ENCODE measurements at regions of chr2 and their contacts with region 1.

Region 1: DNA sequence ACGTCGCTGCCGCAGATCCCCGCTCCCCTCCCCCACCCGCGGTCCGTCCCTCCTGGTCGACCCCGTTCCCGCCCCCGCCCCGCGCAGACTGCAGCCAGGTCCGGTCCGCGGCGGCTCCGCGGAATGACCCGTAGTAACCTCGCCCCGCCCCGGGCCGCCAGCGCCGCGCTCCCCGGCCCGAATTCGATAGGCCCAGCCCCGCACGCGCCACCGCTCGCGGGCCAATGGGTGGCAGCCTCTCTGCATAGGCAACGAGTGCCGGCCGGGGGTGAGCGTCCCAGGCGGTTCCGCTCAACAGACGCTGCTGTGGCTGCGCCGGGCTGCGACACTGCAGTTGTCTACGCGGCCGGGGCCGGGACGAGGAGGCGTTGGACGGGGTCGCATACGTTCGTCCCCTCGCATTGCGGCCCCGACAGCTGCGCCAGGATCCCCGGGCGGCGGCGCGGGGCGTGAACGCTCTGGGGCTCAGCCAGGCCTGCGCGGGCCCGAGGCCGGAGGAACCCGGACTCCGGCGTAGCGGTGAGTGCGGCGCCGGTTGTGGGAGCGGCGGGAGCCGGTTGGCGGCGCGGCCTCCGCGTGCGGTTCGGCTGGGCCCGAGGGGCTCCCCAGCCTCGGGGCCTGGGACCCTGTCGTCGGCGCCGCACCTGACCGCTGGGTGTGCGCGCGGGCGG is at the start of gene ACSL3:
- DNase-seq: peak; percentile 96
- H3K4me3 Mint-ChIP-seq: no peak within 1 kb of the TSS
- H3K27ac Mint-ChIP-seq: peak within 1 kb of the TSS; percentile 66
- H3K4me1 Mint-ChIP-seq: peaks cover 14% of the 10 kb centered on the region
- H3K27me3 Mint-ChIP-seq: no peaks in the 10 kb centered on the region
- CTCF ChIP-seq: peak; percentile 4
- total RNA-seq, gene ACSL3: 183 and 203 TPM in 2 replicates

Region 2: GRCh38 chr2:222690564-222691200 is 170.2 kb before region 1 on chr2:
- CTCF ChIA-PET with region 1: interaction called, 9 read pairs
- POLR2A ChIA-PET with region 1: no interaction called
- intact Hi-C with region 1: loop called (anchors 1 kb)
- DNase-seq: peak; percentile 77
- H3K4me3 Mint-ChIP-seq: no peak overlapping the region
- H3K27ac Mint-ChIP-seq: no peak overlapping the region
- H3K4me1 Mint-ChIP-seq: no peaks in the 10 kb centered on the region
- H3K27me3 Mint-ChIP-seq: no peaks in the 10 kb centered on the region
- CTCF ChIP-seq: peak; percentile 98

Region 3: DNA sequence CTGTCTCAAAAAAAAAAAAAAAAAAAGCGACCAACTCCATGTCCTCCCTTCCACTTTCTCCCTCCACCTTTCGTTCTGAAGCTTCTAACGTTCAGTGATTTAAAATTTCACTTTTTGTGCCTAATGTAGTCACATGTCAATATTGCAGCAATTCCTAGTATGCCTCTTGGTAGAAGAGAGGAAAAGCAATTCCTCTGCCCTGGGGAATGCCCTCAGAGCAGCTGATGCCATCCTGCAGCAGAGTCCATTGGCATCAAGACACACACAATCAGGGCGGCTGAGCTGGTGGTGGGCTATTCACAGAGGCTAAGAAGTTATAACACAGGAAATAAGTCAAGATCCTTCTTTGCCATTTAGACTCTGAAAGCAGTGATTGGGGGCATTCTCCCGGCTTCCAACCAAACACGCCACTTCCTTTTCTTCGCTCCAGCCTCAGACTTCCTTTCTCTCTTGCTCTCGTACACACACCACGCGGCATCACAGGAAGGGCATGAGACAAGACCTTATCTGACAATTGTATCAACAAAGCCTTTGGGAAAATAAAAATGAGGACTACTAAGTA is 117.5 kb before region 1 on chr2:
- CTCF ChIA-PET with region 1: no interaction called
- POLR2A ChIA-PET with region 1: no interaction called
- intact Hi-C with region 1: no loop called
- DNase-seq: no peak
- H3K4me3 Mint-ChIP-seq: no peak overlapping the region
- H3K27ac Mint-ChIP-seq: no peak overlapping the region
- H3K4me1 Mint-ChIP-seq: peaks cover 10% of the 10 kb centered on the region
- H3K27me3 Mint-ChIP-seq: no peaks in the 10 kb centered on the region
- CTCF ChIP-seq: no peak

Region 4: GRCh38 chr2:222797261-222797660 is 63.6 kb before region 1 on chr2:
- CTCF ChIA-PET with region 1: interaction called, 41 read pairs
- POLR2A ChIA-PET with region 1: interaction called, 28 read pairs
- intact Hi-C with region 1: loop called (anchors 1 kb)
- DNase-seq: peak; percentile 53
- H3K4me3 Mint-ChIP-seq: no peak overlapping the region
- H3K27ac Mint-ChIP-seq: no peak overlapping the region
- H3K4me1 Mint-ChIP-seq: peaks cover 18% of the 10 kb centered on the region
- H3K27me3 Mint-ChIP-seq: no peaks in the 10 kb centered on the region
- CTCF ChIP-seq: peak; percentile 46

Region 5: GRCh38 chr2:222827417-222827816 is 33.5 kb before region 1 on chr2:
- CTCF ChIA-PET with region 1: interaction called, 4 read pairs
- POLR2A ChIA-PET with region 1: interaction called, 8 read pairs
- intact Hi-C with region 1: loop called (anchors 5 kb)
- DNase-seq: peak; percentile 55
- H3K4me3 Mint-ChIP-seq: no peak overlapping the region
- H3K27ac Mint-ChIP-seq: no peak overlapping the region
- H3K4me1 Mint-ChIP-seq: peaks cover 20% of the 10 kb centered on the region
- H3K27me3 Mint-ChIP-seq: no peaks in the 10 kb centered on the region
- CTCF ChIP-seq: no peak

Region 6: GRCh38 chr2:222872551-222872950 is 11.7 kb after region 1 on chr2:
- CTCF ChIA-PET with region 1: interaction called, 7 read pairs
- POLR2A ChIA-PET with region 1: interaction called, 240 read pairs
- intact Hi-C with region 1: no loop called
- DNase-seq: no peak
- H3K4me3 Mint-ChIP-seq: no peak overlapping the region
- H3K27ac Mint-ChIP-seq: no peak overlapping the region
- H3K4me1 Mint-ChIP-seq: peaks cover 16% of the 10 kb centered on the region
- H3K27me3 Mint-ChIP-seq: no peaks in the 10 kb centered on the region
- CTCF ChIP-seq: no peak

Region 7: GRCh38 chr2:222903234-222904220 is 42.7 kb after region 1 on chr2:
- CTCF ChIA-PET with region 1: interaction called, 57 read pairs
- POLR2A ChIA-PET with region 1: interaction called, 63 read pairs
- intact Hi-C with region 1: loop called (anchors 1 kb)
- DNase-seq: peak; percentile 72
- H3K4me3 Mint-ChIP-seq: no peak overlapping the region
- H3K27ac Mint-ChIP-seq: peak overlapping the region; percentile 39
- H3K4me1 Mint-ChIP-seq: peaks cover 50% of the 10 kb centered on the region
- H3K27me3 Mint-ChIP-seq: no peaks in the 10 kb centered on the region
- CTCF ChIP-seq: peak; percentile 67

Measured in MCF 10A (cell line).